CD4-positive, alpha-beta T cell (primary cell): ENCODE measurements at regions of chr17 and their contacts with region 1.

Region 1: GRCh38 chr17:57518587-57519581 is 226.2 kb downstream of the CCDC182 start:
- DNase-seq: no peak
- ATAC-seq: no peak
- H3K4me3 ChIP-seq: no peak overlapping the region
- H3K4me3 Mint-ChIP-seq: no peak overlapping the region
- H3K27ac ChIP-seq: no peak overlapping the region
- H3K27ac Mint-ChIP-seq: no peak overlapping the region
- H3K4me1 ChIP-seq: no peaks in the 10 kb centered on the region
- H3K4me1 Mint-ChIP-seq: peaks cover 9% of the 10 kb centered on the region
- H3K27me3 ChIP-seq: no peaks in the 10 kb centered on the region
- H3K27me3 Mint-ChIP-seq: no peaks in the 10 kb centered on the region
- CTCF ChIP-seq: no peak

Region 2: GRCh38 chr17:56347639-56348038 is 1171.2 kb before region 1 on chr17:
- CTCF ChIA-PET with region 1: no interaction called
- POLR2A ChIA-PET with region 1: no interaction called
- intact Hi-C with region 1: no loop called
- DNase-seq: no peak
- ATAC-seq: no peak
- H3K4me3 ChIP-seq: no peak overlapping the region
- H3K4me3 Mint-ChIP-seq: no peak overlapping the region
- H3K27ac ChIP-seq: no peak overlapping the region
- H3K27ac Mint-ChIP-seq: no peak overlapping the region
- H3K4me1 ChIP-seq: no peaks in the 10 kb centered on the region
- H3K4me1 Mint-ChIP-seq: no peaks in the 10 kb centered on the region
- H3K27me3 ChIP-seq: peaks cover 0 to 10% of the 10 kb centered on the region in 2 experiments
- H3K27me3 Mint-ChIP-seq: peaks cover 29% of the 10 kb centered on the region
- CTCF ChIP-seq: no peak

Region 3: GRCh38 chr17:57455063-57455914 is 63.6 kb before region 1 on chr17:
- CTCF ChIA-PET with region 1: no interaction called
- POLR2A ChIA-PET with region 1: no interaction called
- intact Hi-C with region 1: no loop called
- DNase-seq: peak in 5 of 14 experiments; percentile 8 to 51 (median 40)
- ATAC-seq: peak; percentile 72
- H3K4me3 ChIP-seq: peak overlapping the region; percentile 13
- H3K4me3 Mint-ChIP-seq: peak overlapping the region; percentile 74
- H3K27ac ChIP-seq: peak overlapping the region; percentile 30 to 36
- H3K27ac Mint-ChIP-seq: peak overlapping the region; percentile 68
- H3K4me1 ChIP-seq: peaks cover 68% of the 10 kb centered on the region
- H3K4me1 Mint-ChIP-seq: peaks cover 77% of the 10 kb centered on the region
- H3K27me3 ChIP-seq: no peaks in the 10 kb centered on the region
- H3K27me3 Mint-ChIP-seq: no peaks in the 10 kb centered on the region
- CTCF ChIP-seq: no peak

Region 4: DNA sequence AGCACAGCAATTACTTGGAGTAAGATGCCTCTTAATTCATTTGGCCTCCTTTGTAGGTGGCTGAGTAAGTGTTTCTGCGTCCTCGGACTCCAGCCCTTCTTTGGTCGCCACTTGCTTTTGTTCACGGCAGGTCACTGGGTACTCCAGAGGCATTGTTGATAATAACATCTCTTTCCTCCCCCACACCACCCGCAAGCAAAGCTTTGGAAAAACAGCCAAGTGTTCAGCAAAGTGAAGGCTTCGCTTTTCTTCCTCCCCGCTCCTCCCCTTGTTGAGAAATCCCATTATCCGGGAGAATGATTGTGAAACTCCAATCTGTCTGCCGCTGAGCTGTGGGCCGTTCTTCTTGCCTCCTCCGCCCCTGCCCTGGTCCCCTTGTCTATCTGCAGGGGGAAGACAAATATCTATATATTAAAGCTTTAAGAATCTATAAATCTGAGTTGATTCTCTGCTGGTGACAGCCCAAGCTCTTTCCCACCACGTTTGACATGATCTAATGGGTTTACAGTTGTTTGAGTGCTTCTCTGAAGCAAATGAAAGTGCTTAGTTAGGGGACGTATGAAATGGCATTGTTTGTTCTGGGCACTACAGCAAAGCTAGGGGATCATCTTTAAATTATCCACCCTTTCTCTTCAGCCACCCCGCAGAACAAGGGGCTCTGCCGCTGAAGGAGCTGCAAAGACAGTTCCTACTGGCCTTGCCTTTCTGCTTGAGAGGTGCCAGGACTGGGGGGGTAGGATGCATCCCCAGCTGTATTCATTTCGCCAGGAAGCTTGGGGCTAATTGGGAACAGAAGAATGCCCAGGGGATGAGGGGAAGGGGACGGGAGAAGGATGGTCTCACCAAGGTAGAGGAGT is 59.1 kb after region 1 on chr17:
- CTCF ChIA-PET with region 1: no interaction called
- POLR2A ChIA-PET with region 1: no interaction called
- intact Hi-C with region 1: loop called in 1 of 2 experiments (anchors 10 kb)
- DNase-seq: no peak
- ATAC-seq: no peak
- H3K4me3 ChIP-seq: no peak overlapping the region
- H3K4me3 Mint-ChIP-seq: no peak overlapping the region
- H3K27ac ChIP-seq: no peak overlapping the region
- H3K27ac Mint-ChIP-seq: peak overlapping the region; percentile 18
- H3K4me1 ChIP-seq: no peaks in the 10 kb centered on the region
- H3K4me1 Mint-ChIP-seq: no peaks in the 10 kb centered on the region
- H3K27me3 ChIP-seq: no peaks in the 10 kb centered on the region
- H3K27me3 Mint-ChIP-seq: no peaks in the 10 kb centered on the region
- CTCF ChIP-seq: no peak